ENCODE measurements at regions of chr19 and their contacts with region 1.

Region 1: DNA sequence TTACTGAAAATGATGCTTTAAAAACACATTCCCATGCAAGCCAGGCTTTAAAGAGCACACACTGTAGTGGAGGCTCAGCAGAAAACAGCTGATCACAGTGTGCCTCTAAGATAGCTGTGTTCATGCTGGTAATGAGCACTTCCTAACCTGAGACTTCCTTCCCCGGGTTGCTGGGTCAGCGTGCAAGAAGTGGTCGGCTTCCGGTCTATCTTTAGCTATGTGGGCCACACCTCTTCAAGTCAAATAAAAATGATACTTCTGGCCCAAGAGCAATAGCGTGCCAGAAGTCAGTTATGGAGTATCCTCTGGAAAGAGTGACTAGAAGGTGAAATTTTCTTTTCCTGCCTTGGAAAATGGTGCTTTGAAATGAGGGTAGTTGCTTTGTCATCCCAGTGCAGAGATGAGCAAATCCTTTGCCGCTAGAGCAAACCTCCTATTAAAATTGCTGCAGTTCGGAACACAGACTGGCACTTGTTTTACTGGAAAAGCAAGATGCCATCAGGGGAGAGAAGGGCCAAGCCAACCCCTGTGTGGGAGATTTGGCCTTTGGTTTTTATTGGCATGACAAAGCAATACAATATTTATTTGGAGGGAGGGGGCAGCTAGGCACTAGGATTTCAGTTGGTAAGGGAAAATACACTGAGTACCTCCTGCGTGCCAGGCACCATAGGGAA is 64.2 kb downstream of the ARHGAP35 start:
- DNase-seq: no peak
- ATAC-seq: peak; percentile 76
- H3K4me3 ChIP-seq: no peak overlapping the region
- H3K27ac ChIP-seq: no peak overlapping the region
- H3K4me1 ChIP-seq: peaks cover 28% of the 10 kb centered on the region
- H3K27me3 ChIP-seq: no peaks in the 10 kb centered on the region
- CTCF ChIP-seq: no peak
- EP300 ChIP-seq: no peak
- POLR2A ChIP-seq: no peak
- RAD21 ChIP-seq: no peak

Region 2: DNA sequence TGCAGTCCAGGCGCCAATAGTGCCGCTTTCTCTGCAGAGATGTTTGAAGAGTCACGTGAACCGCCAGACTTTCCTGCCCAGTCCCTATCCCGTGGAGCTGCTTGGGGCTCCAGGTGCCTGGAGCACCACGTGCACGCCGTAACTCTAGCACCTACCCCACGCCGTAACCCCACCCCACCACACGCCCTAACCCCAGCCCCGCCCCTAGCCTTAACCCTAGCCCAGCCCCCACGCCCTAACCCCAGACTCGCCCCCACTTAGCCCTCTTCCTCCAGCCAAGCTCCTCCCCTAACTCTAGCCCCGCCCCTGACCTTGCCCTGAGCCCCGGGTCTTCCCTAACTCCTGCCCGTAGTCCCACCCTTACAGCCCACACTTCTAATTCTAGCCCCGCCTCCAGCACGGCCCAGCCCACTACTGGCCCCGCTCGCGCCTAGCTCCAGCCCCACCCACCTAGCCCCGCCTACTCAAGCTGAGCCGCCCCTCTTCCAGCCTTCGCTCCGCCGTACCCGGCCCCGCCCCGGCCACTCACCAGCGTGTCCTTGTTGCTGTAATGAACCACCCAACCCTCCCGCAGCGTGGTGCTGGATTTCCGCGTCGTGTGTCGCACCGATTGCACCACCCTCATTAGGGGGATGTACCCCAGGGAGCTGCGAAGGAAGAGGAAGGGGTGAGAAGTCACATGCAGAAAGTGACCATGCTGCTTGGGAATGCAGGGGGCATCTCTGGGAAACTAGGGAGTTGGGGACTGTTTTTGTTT is 227.6 kb before region 1 on chr19:
- CTCF ChIA-PET with region 1: no interaction called
- POLR2A ChIA-PET with region 1: no interaction called
- RAD21 ChIA-PET with region 1: no interaction called
- SMC1A ChIA-PET with region 1: no interaction called
- in situ Hi-C with region 1: no loop called
- intact Hi-C with region 1: no loop called
- DNase-seq: no peak
- ATAC-seq: peak; percentile 42
- H3K4me3 ChIP-seq: no peak overlapping the region
- H3K27ac ChIP-seq: no peak overlapping the region
- H3K4me1 ChIP-seq: no peaks in the 10 kb centered on the region
- H3K27me3 ChIP-seq: no peaks in the 10 kb centered on the region
- CTCF ChIP-seq: no peak
- EP300 ChIP-seq: no peak
- POLR2A ChIP-seq: peak; percentile 15
- RAD21 ChIP-seq: no peak

Region 3: DNA sequence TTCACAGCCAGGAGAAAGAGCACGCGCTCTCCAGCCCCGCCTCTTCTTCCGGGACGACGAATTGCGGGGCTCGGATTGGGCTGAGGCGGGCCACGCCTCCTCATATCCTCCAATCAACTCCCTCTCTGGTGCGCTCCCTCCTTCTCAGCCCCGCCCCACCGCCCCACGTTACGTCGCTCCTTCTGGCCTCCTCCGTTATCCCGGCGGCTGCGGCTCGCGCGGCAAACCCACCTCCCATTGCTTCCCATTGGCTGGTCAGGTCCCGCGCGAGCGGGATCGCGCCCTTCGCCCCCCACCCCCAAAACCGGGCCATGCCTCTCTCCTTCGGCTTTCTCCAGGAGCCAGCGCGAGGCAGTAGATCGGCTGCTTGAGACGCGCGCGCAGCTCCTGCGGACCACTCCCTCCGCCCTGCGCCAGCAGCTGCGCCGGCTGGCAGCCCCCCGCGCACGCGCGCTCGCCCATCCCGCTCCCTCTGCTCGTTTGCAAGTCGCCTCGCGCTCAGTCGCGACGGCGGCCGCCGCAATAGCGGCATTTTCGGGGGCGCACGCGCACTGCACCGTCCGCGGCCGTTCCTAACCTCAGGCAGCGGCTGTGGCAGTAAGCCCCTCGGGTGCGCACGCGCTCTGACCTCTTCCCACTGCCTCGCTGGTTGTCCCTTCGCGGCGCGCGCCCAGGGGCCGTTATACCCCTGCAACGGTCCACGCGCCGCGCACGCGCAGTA is 64.7 kb before region 1 on chr19:
- CTCF ChIA-PET with region 1: interaction called, 3 read pairs
- POLR2A ChIA-PET with region 1: no interaction called
- RAD21 ChIA-PET with region 1: interaction called, 11 read pairs
- SMC1A ChIA-PET with region 1: interaction called, 4 read pairs
- in situ Hi-C with region 1: no loop called
- intact Hi-C with region 1: no loop called
- DNase-seq: peak; percentile 92
- ATAC-seq: peak; percentile 89
- H3K4me3 ChIP-seq: peak overlapping the region; percentile 69
- H3K27ac ChIP-seq: peak overlapping the region; percentile 92
- H3K4me1 ChIP-seq: peaks cover 12% of the 10 kb centered on the region; the same call in 1 of the 2 replicates
- H3K27me3 ChIP-seq: no peaks in the 10 kb centered on the region
- CTCF ChIP-seq: no peak
- EP300 ChIP-seq: 0 out of 4 replicates have a peak, but pooled peaks of 1 of the 2 experiments have one; percentile 25
- POLR2A ChIP-seq: peak; percentile 90
- RAD21 ChIP-seq: no peak

Region 4: GRCh38 chr19:46878613-46879375 is 46.2 kb before region 1 on chr19:
- CTCF ChIA-PET with region 1: no interaction called
- POLR2A ChIA-PET with region 1: no interaction called
- RAD21 ChIA-PET with region 1: no interaction called
- SMC1A ChIA-PET with region 1: no interaction called
- in situ Hi-C with region 1: no loop called
- intact Hi-C with region 1: no loop called
- DNase-seq: no peak
- ATAC-seq: no peak
- H3K4me3 ChIP-seq: no peak overlapping the region
- H3K27ac ChIP-seq: no peak overlapping the region
- H3K4me1 ChIP-seq: no peaks in the 10 kb centered on the region
- H3K27me3 ChIP-seq: no peaks in the 10 kb centered on the region
- CTCF ChIP-seq: no peak
- EP300 ChIP-seq: no peak
- POLR2A ChIP-seq: no peak
- RAD21 ChIP-seq: no peak

Region 5: DNA sequence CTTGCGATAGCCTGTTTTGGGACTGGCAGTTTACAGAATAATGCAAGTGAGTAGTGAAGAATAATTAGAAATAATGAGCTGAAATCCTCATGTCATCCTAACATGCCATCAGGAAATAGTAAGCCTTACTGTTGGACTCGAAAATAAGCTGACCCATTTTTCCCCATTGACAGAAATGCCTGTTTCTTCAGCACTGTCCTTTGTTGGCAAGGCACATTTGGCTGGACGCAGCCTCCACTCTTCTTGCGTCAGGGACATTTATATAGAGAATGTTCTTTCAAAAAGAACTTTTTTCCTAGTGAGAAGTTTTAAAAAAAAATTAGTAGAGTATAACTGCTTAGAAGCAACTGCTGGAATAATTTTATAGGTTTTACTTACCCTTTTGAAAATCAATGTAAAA is 17.1 kb before region 1 on chr19:
- CTCF ChIA-PET with region 1: interaction called, 13 read pairs
- POLR2A ChIA-PET with region 1: interaction called, 10 read pairs
- RAD21 ChIA-PET with region 1: no interaction called
- SMC1A ChIA-PET with region 1: interaction called, 8 read pairs
- in situ Hi-C with region 1: no loop called
- intact Hi-C with region 1: no loop called
- DNase-seq: no peak
- ATAC-seq: no peak
- H3K4me3 ChIP-seq: no peak overlapping the region
- H3K27ac ChIP-seq: no peak overlapping the region
- H3K4me1 ChIP-seq: no peaks in the 10 kb centered on the region; the same call in 1 of the 2 replicates
- H3K27me3 ChIP-seq: no peaks in the 10 kb centered on the region
- CTCF ChIP-seq: no peak
- EP300 ChIP-seq: no peak
- POLR2A ChIP-seq: no peak
- RAD21 ChIP-seq: no peak